CD4-positive, alpha-beta T cell (primary cell): ENCODE measurements at regions of chr1 and their contacts with region 1.

Region 1: DNA sequence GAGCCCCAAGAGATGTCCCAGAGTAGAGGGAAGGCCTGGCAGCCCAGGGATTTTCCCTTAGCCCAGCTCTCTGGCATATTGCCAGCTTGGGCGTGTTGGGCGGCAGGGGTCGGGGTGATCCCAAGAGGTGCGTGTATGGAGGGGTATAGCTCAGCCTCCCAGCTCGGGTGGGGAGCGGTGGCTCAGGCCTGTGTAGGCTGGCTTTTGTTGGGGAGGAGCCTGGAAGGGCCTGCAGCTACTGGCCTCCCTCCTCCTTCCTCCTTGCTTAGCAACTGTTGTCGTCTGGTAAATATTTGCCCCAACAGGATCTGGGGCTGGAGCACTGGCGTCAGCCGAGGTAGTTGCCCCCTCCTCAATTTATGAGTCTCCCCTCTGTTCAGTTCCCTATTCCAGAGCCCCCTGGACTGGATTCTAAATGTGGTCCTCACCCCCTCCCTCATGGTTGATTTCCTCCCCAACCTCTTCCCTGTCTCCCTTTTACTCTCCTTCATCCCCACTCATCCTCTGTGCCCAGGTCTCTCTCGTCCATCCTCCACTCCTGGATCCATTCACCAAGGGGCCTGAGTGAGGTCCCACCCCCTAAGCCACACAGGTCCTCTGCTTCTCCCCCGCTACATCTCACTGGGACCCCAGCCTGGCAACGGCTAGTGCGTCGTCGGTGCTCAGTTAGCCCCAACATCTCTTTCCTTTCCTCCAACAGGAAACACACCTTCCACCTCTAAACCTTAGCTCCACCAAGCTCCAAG is 10.3 kb upstream of the LMNA start:
- DNase-seq: peak in 9 of 14 experiments; percentile 37 to 93 (median 68)
- ATAC-seq: peak; percentile 32
- H3K4me3 ChIP-seq: no peak overlapping the region
- H3K4me3 Mint-ChIP-seq: peak overlapping the region; percentile 74
- H3K27ac ChIP-seq: peak overlapping the region; percentile 29 to 95
- H3K27ac Mint-ChIP-seq: peak overlapping the region; percentile 94
- H3K4me1 ChIP-seq: peaks cover 51% of the 10 kb centered on the region
- H3K4me1 Mint-ChIP-seq: peaks cover 51% of the 10 kb centered on the region
- H3K27me3 ChIP-seq: no peaks in the 10 kb centered on the region
- H3K27me3 Mint-ChIP-seq: no peaks in the 10 kb centered on the region
- CTCF ChIP-seq: no peak

Region 2: GRCh38 chr1:156114101-156114916 is 10.1 kb after region 1 on chr1 and contains the start of gene LMNA:
- CTCF ChIA-PET with region 1: interaction called, 4 read pairs
- POLR2A ChIA-PET with region 1: interaction called, 23 read pairs
- intact Hi-C with region 1: loop called in 1 of 2 experiments (anchors 1 kb)
- DNase-seq: peak in 13 of 14 experiments; percentile 51 to 93 (median 68)
- ATAC-seq: peak; percentile 77
- H3K4me3 ChIP-seq: peak within 1 kb of the TSS; percentile 84
- H3K4me3 Mint-ChIP-seq: peak within 1 kb of the TSS; percentile 99
- H3K27ac ChIP-seq: peak within 1 kb of the TSS; percentile 50 to 64
- H3K27ac Mint-ChIP-seq: peak within 1 kb of the TSS; percentile 89
- H3K4me1 ChIP-seq: peaks cover 55% of the 10 kb centered on the region
- H3K4me1 Mint-ChIP-seq: peaks cover 31% of the 10 kb centered on the region
- H3K27me3 ChIP-seq: peaks cover 24 to 28% of the 10 kb centered on the region in 2 experiments
- H3K27me3 Mint-ChIP-seq: peaks cover 46% of the 10 kb centered on the region
- CTCF ChIP-seq: no peak
- total RNA-seq, gene LMNA: 435 to 455 TPM

Region 3: GRCh38 chr1:156129706-156130581 is 25.7 kb after region 1 on chr1:
- CTCF ChIA-PET with region 1: interaction called, 194 read pairs
- POLR2A ChIA-PET with region 1: interaction called, 8 read pairs
- intact Hi-C with region 1: loop called in 1 of 2 experiments (anchors 1 kb)
- DNase-seq: peak; percentile 60 to 87 (median 72)
- ATAC-seq: no peak
- H3K4me3 ChIP-seq: no peak overlapping the region
- H3K4me3 Mint-ChIP-seq: peak overlapping the region; percentile 60
- H3K27ac ChIP-seq: no peak overlapping the region
- H3K27ac Mint-ChIP-seq: peak overlapping the region; percentile 78
- H3K4me1 ChIP-seq: peaks cover 58% of the 10 kb centered on the region
- H3K4me1 Mint-ChIP-seq: peaks cover 50% of the 10 kb centered on the region
- H3K27me3 ChIP-seq: no peaks in the 10 kb centered on the region
- H3K27me3 Mint-ChIP-seq: no peaks in the 10 kb centered on the region
- CTCF ChIP-seq: peak; percentile 92